GM12878 (cell line): ENCODE measurements at regions of chr7 and their contacts with region 1.

Region 1: GRCh38 chr7:51162724-51163329 is 153.8 kb downstream of the COBL start:
- DNase-seq: peak; percentile 32
- ATAC-seq: peak; percentile 99
- H3K4me3 ChIP-seq: no peak overlapping the region
- H3K27ac ChIP-seq: no peak overlapping the region
- H3K4me1 ChIP-seq: no peaks in the 10 kb centered on the region
- H3K27me3 ChIP-seq: peaks cover 0 to 1% of the 10 kb centered on the region in 2 experiments; a peak in 2 of 4 replicates
- CTCF ChIP-seq: peak; percentile 82 to 85 (median 83)
- EP300 ChIP-seq: no peak
- POLR2A ChIP-seq: no peak
- RAD21 ChIP-seq: peak; percentile 74

Region 2: DNA sequence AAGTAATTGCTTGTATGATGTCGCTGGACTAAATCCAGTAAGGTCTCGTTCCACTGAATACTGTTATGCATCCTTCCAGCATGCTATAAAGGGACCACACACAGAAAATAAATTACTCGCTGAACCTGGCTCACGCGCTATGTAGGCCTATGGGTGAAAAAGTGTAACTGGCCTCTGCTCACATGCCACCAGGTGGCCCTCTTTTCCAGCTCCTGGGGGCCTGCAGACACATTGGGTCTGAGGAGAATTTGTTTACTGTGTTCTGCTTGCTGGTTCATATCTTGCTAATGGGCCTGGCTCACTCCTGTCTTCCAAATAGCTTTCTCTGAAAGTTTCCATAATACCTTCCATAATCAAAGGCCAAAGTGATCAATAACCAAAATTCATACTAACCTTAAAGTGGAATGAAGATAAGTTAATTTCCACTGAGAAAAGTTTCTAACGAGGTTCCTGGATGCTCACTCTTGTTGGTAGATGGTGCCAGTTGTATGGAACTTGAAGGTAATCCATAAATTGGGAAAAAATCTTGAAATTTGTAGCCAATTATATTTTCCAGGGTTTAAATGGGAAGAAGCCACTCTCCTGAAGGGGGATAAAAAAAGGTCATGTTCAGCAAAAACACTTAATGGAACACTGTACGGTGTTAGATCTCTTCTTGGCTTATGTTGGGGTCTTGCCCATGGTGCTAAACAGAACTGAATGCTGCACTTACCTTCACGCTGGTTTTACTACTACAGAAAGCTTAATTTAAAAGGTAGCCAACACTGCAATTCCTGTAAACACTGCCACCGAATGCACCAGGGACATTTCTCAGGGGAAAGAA is 1042.8 kb before region 1 on chr7:
- CTCF ChIA-PET with region 1: interaction called, 24 read pairs
- POLR2A ChIA-PET with region 1: no interaction called
- RAD21 ChIA-PET with region 1: no interaction called
- SMC1A ChIA-PET with region 1: interaction called, 3 read pairs
- in situ Hi-C with region 1: no loop called
- intact Hi-C with region 1: no loop called
- DNase-seq: no peak
- ATAC-seq: peak; percentile 98
- H3K4me3 ChIP-seq: no peak overlapping the region
- H3K27ac ChIP-seq: no peak overlapping the region
- H3K4me1 ChIP-seq: peaks cover 4% of the 10 kb centered on the region; the same call in 1 of the 2 replicates
- H3K27me3 ChIP-seq: no peaks in the 10 kb centered on the region
- CTCF ChIP-seq: peak; percentile 68 to 70 (median 69)
- EP300 ChIP-seq: no peak
- POLR2A ChIP-seq: no peak
- RAD21 ChIP-seq: peak; percentile 77

Region 3: DNA sequence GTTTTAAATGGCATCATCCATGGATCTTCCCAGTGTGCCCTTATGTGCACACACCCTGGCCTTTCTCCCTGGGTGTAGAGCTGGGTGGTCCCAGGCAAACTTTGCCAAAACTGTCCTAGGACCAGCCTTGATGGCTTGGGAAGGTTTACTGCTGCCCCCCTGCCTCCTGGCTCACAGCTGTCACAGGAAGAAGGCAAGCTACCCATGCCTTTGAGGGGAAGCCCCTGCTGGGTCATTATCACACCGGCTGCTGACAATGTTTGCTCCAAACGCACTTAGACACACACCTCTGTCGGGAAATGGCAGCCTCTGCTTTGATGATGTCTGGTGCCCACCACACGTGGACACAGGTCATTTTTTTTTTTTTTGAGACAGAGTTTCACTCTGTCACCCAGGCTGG is 687.5 kb before region 1 on chr7:
- CTCF ChIA-PET with region 1: interaction called, 61 read pairs
- POLR2A ChIA-PET with region 1: no interaction called
- RAD21 ChIA-PET with region 1: no interaction called
- SMC1A ChIA-PET with region 1: no interaction called
- in situ Hi-C with region 1: no loop called
- intact Hi-C with region 1: no loop called
- DNase-seq: no peak
- ATAC-seq: peak; percentile 76
- H3K4me3 ChIP-seq: no peak overlapping the region
- H3K27ac ChIP-seq: no peak overlapping the region
- H3K4me1 ChIP-seq: no peaks in the 10 kb centered on the region
- H3K27me3 ChIP-seq: peaks cover 0 to 2% of the 10 kb centered on the region in 2 experiments; a peak in 3 of 4 replicates
- CTCF ChIP-seq: no peak
- EP300 ChIP-seq: no peak
- POLR2A ChIP-seq: no peak
- RAD21 ChIP-seq: no peak

Region 4: GRCh38 chr7:51067757-51068156 is 95.1 kb before region 1 on chr7:
- CTCF ChIA-PET with region 1: interaction called, 10 read pairs
- POLR2A ChIA-PET with region 1: no interaction called
- RAD21 ChIA-PET with region 1: no interaction called
- SMC1A ChIA-PET with region 1: interaction called, 6 read pairs
- in situ Hi-C with region 1: no loop called
- intact Hi-C with region 1: no loop called
- DNase-seq: no peak
- ATAC-seq: peak; percentile 65; the same call in 2 of the 3 replicates
- H3K4me3 ChIP-seq: no peak overlapping the region
- H3K27ac ChIP-seq: no peak overlapping the region
- H3K4me1 ChIP-seq: no peaks in the 10 kb centered on the region
- H3K27me3 ChIP-seq: no peaks in the 10 kb centered on the region
- CTCF ChIP-seq: peak; percentile 43 to 55 (median 53); a peak in 5 of 6 replicates
- EP300 ChIP-seq: no peak
- POLR2A ChIP-seq: no peak
- RAD21 ChIP-seq: peak; percentile 46

Region 5: DNA sequence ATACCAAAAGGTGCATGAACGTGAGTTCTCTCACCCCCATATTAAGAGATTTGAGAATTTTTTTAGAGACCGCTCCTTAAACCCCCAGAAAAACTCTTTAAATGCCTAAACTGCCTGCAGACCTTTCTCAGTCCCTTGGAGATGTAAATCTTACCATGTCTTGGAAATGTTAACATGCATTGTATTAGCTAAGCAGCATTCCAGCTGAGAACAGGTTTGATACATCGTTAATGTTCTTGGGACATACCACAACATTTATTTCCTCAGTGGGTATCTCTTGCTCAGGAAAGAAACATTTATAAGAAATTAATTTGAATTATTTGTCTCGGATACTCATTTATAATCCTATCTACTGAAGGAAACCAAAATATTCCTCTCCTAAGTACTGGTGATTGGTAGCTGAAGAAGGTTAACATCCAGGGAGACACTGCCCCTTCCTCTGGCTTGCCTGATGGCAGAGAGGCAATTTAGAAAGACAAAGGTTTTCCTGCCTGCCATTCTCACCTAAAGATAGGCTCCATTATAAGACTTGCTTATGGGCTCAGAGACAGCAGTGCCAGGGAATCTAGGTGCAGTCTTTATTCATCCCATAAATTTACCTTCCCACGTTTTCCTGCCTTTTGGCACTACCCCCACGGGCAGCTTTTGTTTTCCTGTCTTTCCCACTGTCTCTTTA is 12.6 kb after region 1 on chr7:
- CTCF ChIA-PET with region 1: interaction called, 82 read pairs
- POLR2A ChIA-PET with region 1: no interaction called
- RAD21 ChIA-PET with region 1: interaction called, 4 read pairs
- SMC1A ChIA-PET with region 1: interaction called, 4 read pairs
- in situ Hi-C with region 1: no loop called
- intact Hi-C with region 1: no loop called
- DNase-seq: no peak
- ATAC-seq: no peak
- H3K4me3 ChIP-seq: no peak overlapping the region
- H3K27ac ChIP-seq: no peak overlapping the region
- H3K4me1 ChIP-seq: no peaks in the 10 kb centered on the region
- H3K27me3 ChIP-seq: no peaks in the 10 kb centered on the region; a peak in 1 of 4 replicates
- CTCF ChIP-seq: no peak
- EP300 ChIP-seq: no peak
- POLR2A ChIP-seq: no peak
- RAD21 ChIP-seq: no peak

Region 6: DNA sequence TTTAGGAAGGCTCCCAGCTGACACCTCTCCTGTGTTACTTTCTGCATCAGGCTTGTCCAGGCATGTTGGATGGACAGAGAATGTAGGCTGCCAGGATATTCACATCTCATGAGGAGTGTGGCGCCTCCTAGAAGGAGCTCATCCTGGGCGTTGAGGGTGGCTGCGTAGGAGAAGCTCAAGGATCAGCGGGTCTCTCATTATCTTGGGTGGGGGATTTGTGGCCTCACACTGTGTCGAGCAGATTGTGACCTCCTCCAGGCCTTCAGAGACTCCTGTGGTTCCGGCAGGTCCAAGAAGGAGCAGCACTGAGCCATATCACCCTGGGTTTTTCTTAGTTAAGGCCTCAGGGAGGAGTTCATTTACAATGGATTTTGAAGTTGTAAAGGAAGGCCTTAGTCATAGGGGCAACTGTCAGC is 162.4 kb after region 1 on chr7:
- CTCF ChIA-PET with region 1: no interaction called
- POLR2A ChIA-PET with region 1: no interaction called
- RAD21 ChIA-PET with region 1: no interaction called
- SMC1A ChIA-PET with region 1: no interaction called
- in situ Hi-C with region 1: no loop called
- intact Hi-C with region 1: no loop called
- DNase-seq: no peak
- ATAC-seq: no peak
- H3K4me3 ChIP-seq: no peak overlapping the region
- H3K27ac ChIP-seq: no peak overlapping the region
- H3K4me1 ChIP-seq: no peaks in the 10 kb centered on the region
- H3K27me3 ChIP-seq: no peaks in the 10 kb centered on the region; a peak in 1 of 4 replicates
- CTCF ChIP-seq: no peak
- EP300 ChIP-seq: no peak
- POLR2A ChIP-seq: no peak
- RAD21 ChIP-seq: no peak